Naive thymus-derived CD4-positive, alpha-beta T cell (primary cell): ENCODE measurements at regions of chr3 and their contacts with region 1.

Region 1: GRCh38 chr3:15629860-15630597 is 28.5 kb downstream of the BTD start:
- DNase-seq: peak in 8 of 9 donors; percentile 45 to 79 (median 66)
- ATAC-seq: peak; percentile 99
- H3K4me3 ChIP-seq: no peak overlapping the region
- H3K4me3 Mint-ChIP-seq: peak overlapping the region in 8 of 10 donors; percentile 33 to 71 (median 61)
- H3K27ac ChIP-seq: no peak overlapping the region
- H3K27ac Mint-ChIP-seq: peak overlapping the region in 1 of 9 donors; percentile 62
- H3K4me1 ChIP-seq: peaks cover 6 to 8% of the 10 kb centered on the region in 2 donors
- H3K4me1 Mint-ChIP-seq: peaks cover 14 to 49% (median 34%) of the 10 kb centered on the region in 7 donors
- H3K27me3 ChIP-seq: no peaks in the 10 kb centered on the region
- H3K27me3 Mint-ChIP-seq: no peaks in the 10 kb centered on the region

Region 2: DNA sequence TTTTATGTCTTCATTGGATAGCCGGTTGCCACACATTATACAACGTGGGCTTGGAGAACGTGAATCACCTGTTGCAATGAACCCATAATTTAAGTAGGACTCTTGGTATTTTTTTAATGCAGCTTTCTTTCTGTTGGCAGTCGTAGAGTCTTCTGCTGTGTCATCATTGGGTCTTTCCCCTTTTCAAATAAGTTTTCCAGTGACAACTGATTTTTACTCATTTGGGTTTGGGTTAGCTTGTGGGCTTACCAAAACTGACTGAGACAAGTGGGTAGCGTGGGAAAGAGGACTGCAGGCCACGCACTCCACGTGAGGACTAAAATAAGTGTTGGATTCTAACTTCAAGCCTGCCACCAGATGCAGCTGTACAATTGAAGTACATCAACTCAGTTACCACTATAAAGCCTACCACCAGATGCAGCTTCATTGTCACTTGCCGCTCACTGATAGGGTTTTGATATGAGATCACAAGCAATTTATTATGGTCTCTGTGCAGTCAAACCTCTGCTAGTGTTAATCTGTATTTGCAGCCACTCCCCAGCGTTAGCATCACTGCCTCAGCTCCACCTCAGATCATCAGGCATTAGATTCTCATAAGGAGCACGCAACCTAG is 430.4 kb before region 1 on chr3:
- CTCF ChIA-PET with region 1: no interaction called
- POLR2A ChIA-PET with region 1: no interaction called
- intact Hi-C with region 1: no loop called
- DNase-seq: no peak
- ATAC-seq: no peak
- H3K4me3 ChIP-seq: no peak overlapping the region
- H3K4me3 Mint-ChIP-seq: no peak overlapping the region
- H3K27ac ChIP-seq: no peak overlapping the region
- H3K27ac Mint-ChIP-seq: no peak overlapping the region
- H3K4me1 ChIP-seq: no peaks in the 10 kb centered on the region
- H3K4me1 Mint-ChIP-seq: peaks cover 0 to 17% (median 6%) of the 10 kb centered on the region in 7 donors
- H3K27me3 ChIP-seq: no peaks in the 10 kb centered on the region
- H3K27me3 Mint-ChIP-seq: peaks cover 0 to 31% (median 0%) of the 10 kb centered on the region in 5 donors

Region 3: GRCh38 chr3:15266510-15267376 is 363.3 kb before region 1 on chr3:
- CTCF ChIA-PET with region 1: no interaction called
- POLR2A ChIA-PET with region 1: no interaction called
- intact Hi-C with region 1: no loop called
- DNase-seq: no peak
- ATAC-seq: no peak
- H3K4me3 ChIP-seq: no peak overlapping the region
- H3K4me3 Mint-ChIP-seq: no peak overlapping the region
- H3K27ac ChIP-seq: no peak overlapping the region
- H3K27ac Mint-ChIP-seq: peak overlapping the region in 6 of 9 donors; percentile 17 to 78 (median 70)
- H3K4me1 ChIP-seq: peaks cover 47 to 56% of the 10 kb centered on the region in 2 donors
- H3K4me1 Mint-ChIP-seq: peaks cover 35 to 78% (median 60%) of the 10 kb centered on the region in 7 donors
- H3K27me3 ChIP-seq: no peaks in the 10 kb centered on the region
- H3K27me3 Mint-ChIP-seq: peaks cover 0 to 2% (median 0%) of the 10 kb centered on the region in 5 donors

Region 4: GRCh38 chr3:15693355-15693754 is 63.3 kb after region 1 on chr3:
- CTCF ChIA-PET with region 1: no interaction called
- POLR2A ChIA-PET with region 1: no interaction called
- intact Hi-C with region 1: loop called in 1 of 2 experiments (anchors 5 kb)
- DNase-seq: no peak
- ATAC-seq: no peak
- H3K4me3 ChIP-seq: no peak overlapping the region
- H3K4me3 Mint-ChIP-seq: no peak overlapping the region
- H3K27ac ChIP-seq: no peak overlapping the region
- H3K27ac Mint-ChIP-seq: no peak overlapping the region
- H3K4me1 ChIP-seq: no peaks in the 10 kb centered on the region
- H3K4me1 Mint-ChIP-seq: peaks cover 0 to 9% (median 5%) of the 10 kb centered on the region in 7 donors
- H3K27me3 ChIP-seq: no peaks in the 10 kb centered on the region
- H3K27me3 Mint-ChIP-seq: no peaks in the 10 kb centered on the region

Region 5: GRCh38 chr3:15797642-15798303 is 167.7 kb after region 1 on chr3 and contains the start of gene ANKRD28:
- CTCF ChIA-PET with region 1: interaction called, 4 read pairs
- POLR2A ChIA-PET with region 1: no interaction called
- intact Hi-C with region 1: loop called in 1 of 2 experiments (anchors 5 kb)
- DNase-seq: peak in 5 of 9 donors; percentile 8 to 29 (median 20)
- ATAC-seq: peak; percentile 67
- H3K4me3 ChIP-seq: peak within 1 kb of the TSS; percentile 0
- H3K4me3 Mint-ChIP-seq: peak within 1 kb of the TSS in 9 of 10 donors; percentile 28 to 96 (median 57)
- H3K27ac ChIP-seq: no peak within 1 kb of the TSS
- H3K27ac Mint-ChIP-seq: peak within 1 kb of the TSS in 8 of 9 donors; percentile 2 to 97 (median 50)
- H3K4me1 ChIP-seq: peaks cover 26 to 38% of the 10 kb centered on the region in 2 donors
- H3K4me1 Mint-ChIP-seq: peaks cover 42 to 84% (median 76%) of the 10 kb centered on the region in 7 donors
- H3K27me3 ChIP-seq: no peaks in the 10 kb centered on the region
- H3K27me3 Mint-ChIP-seq: no peaks in the 10 kb centered on the region
- total RNA-seq, gene ANKRD28: 27.4 to 70.4 (median 43.2) TPM

Region 6: GRCh38 chr3:15859507-15860013 is 229.5 kb after region 1 on chr3:
- CTCF ChIA-PET with region 1: no interaction called
- POLR2A ChIA-PET with region 1: no interaction called
- intact Hi-C with region 1: loop called (anchors 1 kb)
- DNase-seq: peak; percentile 57 to 86 (median 71)
- ATAC-seq: peak; percentile 91
- H3K4me3 ChIP-seq: peak overlapping the region; percentile 63
- H3K4me3 Mint-ChIP-seq: peak overlapping the region; percentile 85 to 99 (median 95)
- H3K27ac ChIP-seq: peak overlapping the region; percentile 77
- H3K27ac Mint-ChIP-seq: peak overlapping the region in 6 of 9 donors; percentile 76 to 98 (median 92)
- H3K4me1 ChIP-seq: peaks cover 12 to 14% of the 10 kb centered on the region in 2 donors
- H3K4me1 Mint-ChIP-seq: peaks cover 21 to 50% (median 43%) of the 10 kb centered on the region in 7 donors
- H3K27me3 ChIP-seq: no peaks in the 10 kb centered on the region
- H3K27me3 Mint-ChIP-seq: peaks cover 0 to 10% (median 0%) of the 10 kb centered on the region in 5 donors

Region 7: GRCh38 chr3:15969889-15970640 is 340.0 kb after region 1 on chr3:
- CTCF ChIA-PET with region 1: no interaction called
- POLR2A ChIA-PET with region 1: no interaction called
- intact Hi-C with region 1: loop called in 1 of 2 experiments (anchors 1 kb)
- DNase-seq: no peak
- ATAC-seq: no peak
- H3K4me3 ChIP-seq: no peak overlapping the region
- H3K4me3 Mint-ChIP-seq: peak overlapping the region in 1 of 10 donors; percentile 12
- H3K27ac ChIP-seq: no peak overlapping the region
- H3K27ac Mint-ChIP-seq: no peak overlapping the region
- H3K4me1 ChIP-seq: no peaks in the 10 kb centered on the region
- H3K4me1 Mint-ChIP-seq: no peaks in the 10 kb centered on the region
- H3K27me3 ChIP-seq: no peaks in the 10 kb centered on the region
- H3K27me3 Mint-ChIP-seq: peaks cover 0 to 7% (median 0%) of the 10 kb centered on the region in 5 donors

Region 8: GRCh38 chr3:16177962-16178627 is 548.1 kb after region 1 on chr3:
- CTCF ChIA-PET with region 1: no interaction called
- POLR2A ChIA-PET with region 1: no interaction called
- intact Hi-C with region 1: loop called (anchors 1 to 5 kb)
- DNase-seq: peak; percentile 10 to 72 (median 48)
- ATAC-seq: peak; percentile 75
- H3K4me3 ChIP-seq: no peak overlapping the region
- H3K4me3 Mint-ChIP-seq: peak overlapping the region in 2 of 10 donors; percentile 38 to 39
- H3K27ac ChIP-seq: no peak overlapping the region
- H3K27ac Mint-ChIP-seq: peak overlapping the region in 1 of 9 donors; percentile 40
- H3K4me1 ChIP-seq: no peaks in the 10 kb centered on the region
- H3K4me1 Mint-ChIP-seq: peaks cover 0 to 7% (median 5%) of the 10 kb centered on the region in 7 donors
- H3K27me3 ChIP-seq: no peaks in the 10 kb centered on the region
- H3K27me3 Mint-ChIP-seq: peaks cover 9 to 23% (median 19%) of the 10 kb centered on the region in 5 donors

Region 9: DNA sequence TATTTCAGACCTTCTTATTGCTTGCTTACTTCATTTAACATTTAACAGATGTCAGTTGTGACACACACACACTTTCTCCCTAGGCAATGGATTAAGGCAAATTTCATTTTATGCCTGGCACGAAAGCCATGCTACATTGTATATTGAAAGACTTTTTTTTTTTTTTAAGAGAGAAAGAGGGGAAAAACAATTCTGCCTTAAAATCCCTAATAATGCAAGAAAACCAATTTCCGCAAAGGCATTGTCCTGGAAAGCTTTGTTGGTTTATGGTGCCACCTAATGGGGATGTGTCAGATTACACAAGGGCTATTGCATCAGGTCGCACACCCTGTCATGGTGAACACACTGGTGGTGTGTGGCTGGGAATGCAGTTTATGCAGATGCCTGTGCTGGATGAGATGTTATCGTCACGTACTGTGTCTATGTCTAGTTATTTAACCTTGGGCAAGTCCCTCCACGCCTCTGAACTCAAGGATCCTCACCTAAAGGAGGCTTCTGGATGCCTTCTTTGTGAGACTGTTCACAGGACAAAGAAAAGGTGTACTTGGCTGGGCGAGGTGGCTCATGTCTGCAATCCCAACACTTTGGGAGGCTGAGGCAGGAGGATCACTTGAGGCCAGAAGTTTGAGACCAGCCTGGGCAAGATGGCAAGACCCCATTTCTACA is 920.8 kb after region 1 on chr3:
- CTCF ChIA-PET with region 1: no interaction called
- POLR2A ChIA-PET with region 1: no interaction called
- intact Hi-C with region 1: loop called in 1 of 2 experiments (anchors 1 kb)
- DNase-seq: peak; percentile 36 to 82 (median 76)
- ATAC-seq: peak; percentile 98
- H3K4me3 ChIP-seq: no peak overlapping the region
- H3K4me3 Mint-ChIP-seq: peak overlapping the region in 1 of 10 donors; percentile 10
- H3K27ac ChIP-seq: no peak overlapping the region
- H3K27ac Mint-ChIP-seq: peak overlapping the region in 5 of 9 donors; percentile 16 to 67 (median 36)
- H3K4me1 ChIP-seq: peaks cover 0 to 4% of the 10 kb centered on the region in 2 donors
- H3K4me1 Mint-ChIP-seq: peaks cover 6 to 15% (median 7%) of the 10 kb centered on the region in 7 donors
- H3K27me3 ChIP-seq: no peaks in the 10 kb centered on the region
- H3K27me3 Mint-ChIP-seq: peaks cover 0 to 11% (median 9%) of the 10 kb centered on the region in 5 donors